Natural killer cell (primary cell): ENCODE measurements at regions of chr5 and their contacts with region 1.

Region 1: GRCh38 chr5:102778478-102778877 is 23.4 kb downstream of the PAM start:
- DNase-seq: no peak
- ATAC-seq: no peak
- H3K4me3 ChIP-seq: no peak overlapping the region
- H3K4me3 Mint-ChIP-seq: no peak overlapping the region
- H3K27ac ChIP-seq: no peak overlapping the region
- H3K27ac Mint-ChIP-seq: peak overlapping the region in 1 of 2 donors; percentile 23
- H3K4me1 ChIP-seq: peaks cover under 1% of the 10 kb centered on the region
- H3K4me1 Mint-ChIP-seq: peaks cover 36 to 56% of the 10 kb centered on the region in 2 donors
- H3K27me3 ChIP-seq: no peaks in the 10 kb centered on the region
- H3K27me3 Mint-ChIP-seq: no peaks in the 10 kb centered on the region
- CTCF ChIP-seq: no peak

Region 2: GRCh38 chr5:102583276-102584124 is 195.0 kb before region 1 on chr5:
- intact Hi-C with region 1: loop called (anchors 10 kb)
- DNase-seq: peak in 1 of 2 donors; percentile 20
- ATAC-seq: no peak
- H3K4me3 ChIP-seq: no peak overlapping the region
- H3K4me3 Mint-ChIP-seq: no peak overlapping the region
- H3K27ac ChIP-seq: no peak overlapping the region
- H3K27ac Mint-ChIP-seq: no peak overlapping the region
- H3K4me1 ChIP-seq: no peaks in the 10 kb centered on the region
- H3K4me1 Mint-ChIP-seq: peaks cover 0 to 4% of the 10 kb centered on the region in 2 donors
- H3K27me3 ChIP-seq: no peaks in the 10 kb centered on the region
- H3K27me3 Mint-ChIP-seq: peaks cover 0 to 9% of the 10 kb centered on the region in 2 donors
- CTCF ChIP-seq: peak; percentile 42

Region 3: GRCh38 chr5:102971697-102972293 is 193.3 kb after region 1 on chr5:
- intact Hi-C with region 1: loop called (anchors 1 kb)
- DNase-seq: peak in 1 of 2 donors; percentile 35
- ATAC-seq: peak; percentile 63 to 67 (median 67)
- H3K4me3 ChIP-seq: no peak overlapping the region
- H3K4me3 Mint-ChIP-seq: no peak overlapping the region
- H3K27ac ChIP-seq: no peak overlapping the region
- H3K27ac Mint-ChIP-seq: peak overlapping the region in 1 of 2 donors; percentile 38
- H3K4me1 ChIP-seq: no peaks in the 10 kb centered on the region
- H3K4me1 Mint-ChIP-seq: peaks cover 9 to 16% of the 10 kb centered on the region in 2 donors
- H3K27me3 ChIP-seq: no peaks in the 10 kb centered on the region
- H3K27me3 Mint-ChIP-seq: no peaks in the 10 kb centered on the region
- CTCF ChIP-seq: peak; percentile 35